ENCODE measurements at regions of chr15 and their contacts with region 1.

Region 1: GRCh38 chr15:33234014-33234461 is 39.5 kb upstream of the FMN1 start:
- DNase-seq: peak; percentile 15
- ATAC-seq: peak; percentile 46; the same call in 1 of the 3 replicates
- H3K4me3 ChIP-seq: no peak overlapping the region
- H3K27ac ChIP-seq: no peak overlapping the region
- H3K4me1 ChIP-seq: no peaks in the 10 kb centered on the region
- H3K27me3 ChIP-seq: no peaks in the 10 kb centered on the region
- CTCF ChIP-seq: peak; percentile 35; the same call in 1 of the 2 replicates
- EP300 ChIP-seq: no peak
- POLR2A ChIP-seq: no peak
- RAD21 ChIP-seq: no peak

Region 2: DNA sequence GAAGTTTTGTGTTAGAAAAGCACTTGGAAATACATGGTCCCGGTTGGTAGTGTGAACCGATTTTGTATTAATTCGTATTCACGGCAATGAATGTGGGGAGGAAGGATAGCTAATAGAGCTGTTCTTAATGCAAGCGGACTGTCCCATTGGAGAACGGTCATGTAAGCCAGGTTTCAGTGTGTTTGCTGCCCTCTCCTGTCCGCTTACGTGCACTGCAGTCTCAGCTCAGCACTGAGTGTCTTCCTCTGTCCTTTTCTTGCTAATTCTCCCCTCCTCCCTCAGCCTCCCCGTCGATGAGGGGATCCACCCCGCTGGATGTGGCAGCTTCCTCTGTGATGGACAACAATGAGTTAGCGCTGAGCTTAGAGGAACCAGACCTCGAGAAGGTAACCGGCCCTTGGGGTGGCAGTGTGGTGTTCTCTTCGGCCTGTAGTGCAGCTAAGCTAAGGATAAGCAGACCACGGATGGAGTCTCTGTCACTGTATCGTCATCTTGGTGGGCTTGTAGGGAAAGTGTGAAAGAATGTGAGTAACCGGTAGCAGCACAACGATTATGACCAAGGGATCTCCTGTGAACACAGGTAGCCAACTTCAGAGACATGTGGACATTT is 466.8 kb after region 1 on chr15:
- CTCF ChIA-PET with region 1: interaction called, 10 read pairs
- POLR2A ChIA-PET with region 1: no interaction called
- in situ Hi-C with region 1: loop called (anchors 10 kb)
- intact Hi-C with region 1: loop called (anchors 1 kb)
- DNase-seq: peak; percentile 54
- ATAC-seq: peak; percentile 96
- H3K4me3 ChIP-seq: no peak overlapping the region
- H3K27ac ChIP-seq: no peak overlapping the region
- H3K4me1 ChIP-seq: no peaks in the 10 kb centered on the region
- H3K27me3 ChIP-seq: peaks cover 0 to 4% of the 10 kb centered on the region in 2 experiments; a peak in 2 of 5 replicates
- CTCF ChIP-seq: peak; percentile 89
- EP300 ChIP-seq: no peak
- POLR2A ChIP-seq: no peak
- RAD21 ChIP-seq: peak; percentile 48; the same call in 1 of the 2 replicates

Measured in HepG2 (cell line).